Activated CD4-positive, alpha-beta memory T cell treated with anti-CD3 and anti-CD28 coated beads for 36 hours (primary cell): ENCODE measurements at regions of chr16 and their contacts with region 1.

Region 1: DNA sequence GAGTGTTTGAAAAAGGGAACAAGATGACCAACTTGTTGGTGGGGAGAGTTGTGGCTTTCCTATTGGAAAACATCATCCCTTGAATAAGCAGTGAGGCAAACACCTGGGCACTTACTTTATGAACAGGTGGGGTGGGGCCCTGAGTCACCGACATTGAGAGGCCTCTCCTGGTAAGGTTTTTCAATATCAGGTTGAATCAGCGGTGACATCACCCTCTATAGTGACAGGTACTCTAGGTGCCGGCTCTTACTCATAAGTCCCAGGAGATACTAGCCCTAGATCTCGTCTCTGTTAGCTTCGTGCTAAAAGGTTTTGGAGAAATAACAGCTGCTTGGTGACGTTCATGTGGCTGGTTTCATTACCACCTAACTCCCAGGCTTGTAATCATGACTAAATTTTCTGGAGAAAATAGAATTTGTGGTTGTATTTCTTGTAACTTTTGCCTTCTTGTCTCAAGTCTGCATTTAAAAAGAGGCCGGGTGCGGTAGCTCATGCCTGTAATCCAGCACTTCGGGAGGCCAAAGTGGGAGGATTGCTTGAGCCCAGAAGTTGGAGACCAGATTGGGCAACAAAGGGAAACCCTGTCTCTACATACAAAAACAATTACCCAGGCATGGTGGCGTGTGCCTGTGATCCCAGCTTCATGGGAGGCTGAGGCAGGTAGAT is 19.3 kb downstream of the CDH1 start:
- DNase-seq: peak; percentile 89
- H3K4me3 Mint-ChIP-seq: peak overlapping the region; percentile 58
- H3K27ac Mint-ChIP-seq: peak overlapping the region; percentile 96
- H3K4me1 Mint-ChIP-seq: peaks cover 64% of the 10 kb centered on the region
- H3K27me3 Mint-ChIP-seq: no peaks in the 10 kb centered on the region

Region 2: DNA sequence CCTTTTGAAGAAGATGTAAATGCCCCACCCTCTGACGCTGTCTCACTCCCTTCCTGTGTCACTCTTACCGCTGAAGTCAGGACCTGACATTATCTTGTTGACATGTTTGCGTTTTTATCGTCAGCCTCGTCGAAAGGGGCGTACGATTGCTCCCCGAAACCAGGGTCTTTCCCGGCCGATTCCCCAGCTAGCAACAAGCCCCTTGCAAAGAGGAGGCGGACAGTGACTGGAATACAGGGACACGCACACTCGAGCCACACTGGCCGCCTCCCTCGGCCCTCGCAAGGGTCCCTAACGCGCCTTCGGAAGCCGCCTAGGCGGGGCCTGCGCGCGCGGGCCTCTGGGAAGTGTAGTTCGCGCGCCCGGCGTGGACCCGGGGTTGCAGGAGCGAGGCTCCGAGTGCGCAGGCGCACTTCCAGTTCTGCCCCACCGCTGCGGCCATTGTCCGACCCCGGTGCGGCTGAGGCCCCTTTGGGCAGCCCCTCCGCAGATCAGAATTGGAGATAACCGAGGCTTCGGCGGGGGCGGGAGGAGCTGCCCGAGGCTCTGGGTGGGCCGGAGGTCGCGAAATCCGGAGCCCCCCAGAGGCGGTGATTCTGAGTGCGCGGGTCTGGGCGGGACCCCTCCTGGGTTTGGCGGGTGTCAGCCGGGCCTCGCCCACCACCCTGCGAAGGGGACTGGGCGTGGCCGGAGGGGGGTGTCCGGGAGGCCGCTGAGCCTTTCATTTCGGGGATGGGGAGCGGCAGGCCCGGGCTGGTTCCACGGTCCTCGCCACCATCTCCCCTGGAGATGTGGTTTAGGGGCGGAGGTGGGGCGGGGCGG is 217.3 kb before region 1 on chr16 and contains the start of gene ZFP90:
- CTCF ChIA-PET with region 1: no interaction called
- POLR2A ChIA-PET with region 1: no interaction called
- intact Hi-C with region 1: loop called (anchors 10 kb)
- DNase-seq: peak; percentile 90
- H3K4me3 Mint-ChIP-seq: peak within 1 kb of the TSS; percentile 94
- H3K27ac Mint-ChIP-seq: peak within 1 kb of the TSS; percentile 98
- H3K4me1 Mint-ChIP-seq: peaks cover 16% of the 10 kb centered on the region
- H3K27me3 Mint-ChIP-seq: no peaks in the 10 kb centered on the region
- total RNA-seq, gene ZFP90: 36.6 to 40.2 TPM

Region 3: DNA sequence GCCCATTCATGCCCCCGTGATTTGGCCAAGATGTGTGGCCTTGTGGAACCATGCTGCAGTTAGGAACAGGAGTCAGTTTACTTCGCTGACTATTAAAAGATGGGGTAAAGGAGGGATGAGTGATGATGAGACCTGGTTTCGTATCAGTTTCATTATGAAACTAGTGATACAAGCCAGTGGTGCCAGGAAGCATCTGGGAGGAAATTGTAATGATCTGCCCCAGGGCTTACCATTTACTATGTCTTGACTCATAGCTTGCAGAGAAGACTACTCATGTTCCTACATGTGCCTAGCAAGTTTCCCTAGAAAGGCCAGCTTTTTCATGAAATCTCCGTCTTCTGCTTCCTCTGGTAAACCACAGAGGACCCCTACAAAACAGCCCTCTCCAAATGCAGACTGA is 88.1 kb before region 1 on chr16:
- CTCF ChIA-PET with region 1: no interaction called
- POLR2A ChIA-PET with region 1: interaction called, 13 read pairs
- intact Hi-C with region 1: loop called (anchors 1 kb)
- DNase-seq: peak; percentile 65
- H3K4me3 Mint-ChIP-seq: no peak overlapping the region
- H3K27ac Mint-ChIP-seq: peak overlapping the region; percentile 75
- H3K4me1 Mint-ChIP-seq: peaks cover 24% of the 10 kb centered on the region
- H3K27me3 Mint-ChIP-seq: peaks cover 2% of the 10 kb centered on the region

Region 4: GRCh38 chr16:68719993-68720489 is 36.3 kb before region 1 on chr16:
- CTCF ChIA-PET with region 1: no interaction called
- POLR2A ChIA-PET with region 1: interaction called, 6 read pairs
- intact Hi-C with region 1: loop called (anchors 1 kb)
- DNase-seq: peak; percentile 64
- H3K4me3 Mint-ChIP-seq: no peak overlapping the region
- H3K27ac Mint-ChIP-seq: peak overlapping the region; percentile 84
- H3K4me1 Mint-ChIP-seq: peaks cover 19% of the 10 kb centered on the region
- H3K27me3 Mint-ChIP-seq: no peaks in the 10 kb centered on the region

Region 5: DNA sequence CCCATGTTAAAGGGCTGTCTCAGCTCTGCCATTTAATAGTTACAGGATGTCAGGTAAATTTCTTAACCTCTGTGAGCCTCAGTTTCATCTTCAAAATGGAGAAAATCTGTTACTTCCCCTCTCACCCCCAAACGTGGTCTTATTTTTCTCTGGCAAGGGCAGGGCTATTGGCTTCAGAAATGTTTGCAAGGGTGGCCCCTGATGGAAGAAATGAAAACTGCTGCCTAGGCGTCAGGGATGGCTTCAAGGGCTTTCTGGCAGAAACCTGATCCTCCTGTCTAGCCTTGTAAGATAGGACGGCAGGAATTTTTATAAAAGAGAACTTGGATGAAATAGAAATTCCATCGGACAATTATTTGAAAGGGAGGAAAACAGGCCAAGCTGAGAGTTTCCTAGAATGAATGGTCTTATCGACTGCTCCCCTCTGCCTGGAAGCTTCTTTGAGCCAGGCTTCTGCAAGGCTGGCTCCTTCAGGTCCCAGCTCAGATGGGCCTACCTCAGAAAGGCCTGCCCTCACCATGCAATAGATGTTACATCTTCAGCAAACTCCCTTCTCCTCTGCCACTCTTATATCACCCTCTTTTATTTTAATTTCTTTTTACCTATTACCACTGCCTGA is 44.0 kb after region 1 on chr16:
- CTCF ChIA-PET with region 1: interaction called, 4 read pairs
- POLR2A ChIA-PET with region 1: interaction called, 3 read pairs
- intact Hi-C with region 1: loop called (anchors 2 kb)
- DNase-seq: peak; percentile 81
- H3K4me3 Mint-ChIP-seq: no peak overlapping the region
- H3K27ac Mint-ChIP-seq: no peak overlapping the region
- H3K4me1 Mint-ChIP-seq: peaks cover 7% of the 10 kb centered on the region
- H3K27me3 Mint-ChIP-seq: peaks cover 2% of the 10 kb centered on the region

Region 6: DNA sequence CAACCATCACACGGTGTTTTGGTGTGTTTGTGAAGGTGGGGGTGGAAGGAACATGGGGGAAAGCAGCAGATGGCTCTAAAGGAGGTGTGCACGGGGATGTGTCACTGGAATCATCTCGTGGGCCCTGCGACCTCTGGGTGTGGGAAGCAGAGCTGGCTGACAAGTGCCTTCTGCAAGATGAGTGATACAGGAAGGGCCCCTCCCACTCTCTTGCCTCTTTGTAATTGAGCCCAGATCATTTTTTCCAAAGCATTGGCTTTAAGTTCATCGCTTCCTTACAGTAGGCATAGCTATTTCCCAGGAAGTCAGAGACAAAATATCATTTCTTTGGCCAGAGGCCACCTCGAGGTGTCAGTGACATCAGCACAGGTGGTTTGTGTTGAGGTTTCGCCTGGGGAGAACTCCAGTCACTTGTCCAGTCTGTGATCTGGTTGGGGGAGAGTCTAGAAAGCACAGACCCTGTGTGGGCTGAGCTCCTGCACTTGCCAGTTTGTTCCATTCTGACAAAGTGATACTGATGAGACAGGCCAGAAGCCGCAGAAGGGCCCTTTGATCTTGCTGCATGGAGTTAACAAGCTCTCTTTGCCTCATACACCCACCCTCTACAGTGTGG is 409.9 kb after region 1 on chr16:
- CTCF ChIA-PET with region 1: no interaction called
- POLR2A ChIA-PET with region 1: no interaction called
- intact Hi-C with region 1: loop called (anchors 1 kb)
- DNase-seq: peak; percentile 91
- H3K4me3 Mint-ChIP-seq: peak overlapping the region; percentile 34
- H3K27ac Mint-ChIP-seq: peak overlapping the region; percentile 92
- H3K4me1 Mint-ChIP-seq: peaks cover 46% of the 10 kb centered on the region
- H3K27me3 Mint-ChIP-seq: no peaks in the 10 kb centered on the region